Mammary epithelial cell (primary cell): ENCODE measurements at regions of chr6 and their contacts with region 1.

Region 1: DNA sequence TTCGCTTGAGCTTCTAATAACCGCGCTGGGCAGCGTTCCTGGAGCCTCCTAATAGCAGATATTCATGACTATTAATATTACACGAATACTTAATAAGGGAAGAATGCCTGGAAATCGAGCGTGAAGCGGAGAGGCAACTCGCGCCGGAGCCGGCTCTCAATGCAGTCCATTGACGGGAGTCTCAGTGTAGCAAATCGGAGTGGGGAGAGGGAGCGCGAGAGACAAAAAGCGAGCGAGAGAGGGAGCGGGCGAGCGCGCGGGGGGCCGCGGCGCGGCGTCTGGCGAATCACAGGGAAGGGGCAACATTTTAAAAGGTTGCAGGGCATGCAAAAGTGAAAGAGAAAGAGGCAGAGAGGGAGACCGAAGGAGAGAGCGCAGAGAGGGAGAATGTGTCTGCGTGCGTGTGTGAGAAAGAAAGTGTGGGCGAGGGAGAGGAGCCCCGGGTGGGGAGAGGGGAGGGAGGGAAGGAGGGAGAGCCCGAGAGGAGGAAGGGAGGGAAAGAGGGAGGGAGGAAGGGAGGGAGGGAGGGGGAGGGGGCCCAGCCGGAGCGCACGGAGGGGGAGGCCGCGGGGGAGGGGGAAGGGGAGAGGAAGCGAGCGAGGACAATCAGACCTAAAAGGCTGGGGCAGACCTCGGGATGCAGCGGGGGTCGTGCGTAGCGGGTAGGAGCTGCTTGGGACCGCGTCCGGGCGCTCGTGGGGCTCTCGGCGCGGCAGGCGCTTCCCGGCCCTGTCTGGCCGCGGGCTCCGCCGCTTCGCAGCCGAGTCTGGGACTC is 2.7 kb downstream of the TFAP2A start:
- DNase-seq: peak; percentile 92
- H3K4me3 ChIP-seq: peak overlapping the region; percentile 84 to 97 (median 96)
- H3K27ac ChIP-seq: peak overlapping the region; percentile 99
- H3K4me1 ChIP-seq: peaks cover 16% of the 10 kb centered on the region
- H3K27me3 ChIP-seq: no peaks in the 10 kb centered on the region
- CTCF ChIP-seq: no peak

Region 2: GRCh38 chr6:8539446-8539845 is 1872.7 kb before region 1 on chr6:
- CTCF ChIA-PET with region 1: no interaction called
- dilution Hi-C with region 1: no loop called
- in situ Hi-C with region 1: no loop called
- intact Hi-C with region 1: loop called (anchors 10 kb)
- DNase-seq: peak; percentile 33
- H3K4me3 ChIP-seq: no peak overlapping the region
- H3K27ac ChIP-seq: no peak overlapping the region
- H3K4me1 ChIP-seq: no peaks in the 10 kb centered on the region
- H3K27me3 ChIP-seq: no peaks in the 10 kb centered on the region
- CTCF ChIP-seq: peak; percentile 24 to 51

Region 3: GRCh38 chr6:9250852-9251251 is 1161.3 kb before region 1 on chr6:
- CTCF ChIA-PET with region 1: interaction called, 4 read pairs
- dilution Hi-C with region 1: no loop called
- in situ Hi-C with region 1: no loop called
- intact Hi-C with region 1: loop called (anchors 5 kb)
- DNase-seq: peak; percentile 61
- H3K4me3 ChIP-seq: no peak overlapping the region
- H3K27ac ChIP-seq: no peak overlapping the region
- H3K4me1 ChIP-seq: no peaks in the 10 kb centered on the region
- H3K27me3 ChIP-seq: no peaks in the 10 kb centered on the region
- CTCF ChIP-seq: peak; percentile 72 to 85

Region 4: DNA sequence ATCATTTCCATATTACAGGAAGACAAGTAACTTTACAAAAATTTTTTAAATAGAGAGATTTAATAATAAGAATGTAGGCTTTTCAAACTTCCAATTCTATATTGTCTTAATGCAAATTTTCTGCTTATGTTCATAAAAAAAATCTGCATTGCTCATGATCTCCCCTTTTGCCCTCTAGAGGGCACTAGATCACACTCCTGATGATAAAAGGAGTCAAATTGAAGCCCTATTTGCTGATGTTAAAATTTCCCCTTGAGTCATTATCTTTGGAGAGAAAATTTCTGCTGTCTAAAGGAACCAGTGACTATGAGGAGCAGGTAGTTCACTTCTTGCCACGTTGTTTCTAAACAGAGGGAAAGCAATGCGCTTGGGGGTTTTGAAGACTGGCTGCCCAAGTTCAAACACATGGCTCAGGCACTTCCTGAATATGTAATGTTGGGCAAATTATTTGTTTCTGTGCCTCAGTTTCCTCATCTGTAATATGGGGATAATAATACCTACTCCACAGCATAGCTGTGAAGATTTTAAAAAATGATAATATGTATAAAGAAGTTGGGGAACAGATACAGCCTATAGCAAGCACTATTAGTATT is 871.5 kb before region 1 on chr6:
- CTCF ChIA-PET with region 1: no interaction called
- dilution Hi-C with region 1: no loop called
- in situ Hi-C with region 1: loop called (anchors 25 kb)
- intact Hi-C with region 1: loop called (anchors 1 kb)
- DNase-seq: peak; percentile 72
- H3K4me3 ChIP-seq: no peak overlapping the region
- H3K27ac ChIP-seq: no peak overlapping the region
- H3K4me1 ChIP-seq: no peaks in the 10 kb centered on the region
- H3K27me3 ChIP-seq: no peaks in the 10 kb centered on the region
- CTCF ChIP-seq: peak; percentile 74 to 80

Region 5: DNA sequence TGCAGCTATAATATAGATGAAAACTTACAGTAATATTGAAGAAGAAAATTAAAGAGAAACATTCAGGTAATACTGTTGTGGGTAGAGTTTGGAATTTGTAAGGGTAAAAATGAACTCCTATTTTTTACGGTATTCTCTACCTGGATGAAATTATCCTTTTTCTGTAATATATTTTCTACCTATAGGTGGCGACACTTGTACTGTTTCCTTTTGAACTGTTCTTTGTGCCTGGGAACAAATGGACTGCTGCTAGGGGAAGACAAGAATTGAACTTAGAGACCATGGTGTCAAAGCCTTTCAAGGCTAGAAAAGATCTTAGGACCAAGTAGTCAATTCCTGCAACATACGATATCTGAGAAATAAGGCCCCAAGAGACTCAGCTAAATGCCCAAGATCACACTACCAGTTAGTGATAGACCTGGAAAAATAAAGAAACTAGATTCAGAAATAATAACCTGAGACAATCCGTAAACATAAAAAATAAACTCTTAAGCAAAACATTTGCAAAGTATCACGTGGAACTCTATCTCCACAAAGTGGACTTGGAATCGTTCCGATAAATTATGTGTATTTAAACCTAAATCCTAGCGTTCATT is 381.1 kb before region 1 on chr6:
- CTCF ChIA-PET with region 1: interaction called, 3 read pairs
- dilution Hi-C with region 1: no loop called
- in situ Hi-C with region 1: no loop called
- intact Hi-C with region 1: loop called (anchors 1 kb)
- DNase-seq: peak; percentile 16
- H3K4me3 ChIP-seq: no peak overlapping the region
- H3K27ac ChIP-seq: no peak overlapping the region
- H3K4me1 ChIP-seq: no peaks in the 10 kb centered on the region
- H3K27me3 ChIP-seq: no peaks in the 10 kb centered on the region
- CTCF ChIP-seq: peak; percentile 53 to 60

Region 6: DNA sequence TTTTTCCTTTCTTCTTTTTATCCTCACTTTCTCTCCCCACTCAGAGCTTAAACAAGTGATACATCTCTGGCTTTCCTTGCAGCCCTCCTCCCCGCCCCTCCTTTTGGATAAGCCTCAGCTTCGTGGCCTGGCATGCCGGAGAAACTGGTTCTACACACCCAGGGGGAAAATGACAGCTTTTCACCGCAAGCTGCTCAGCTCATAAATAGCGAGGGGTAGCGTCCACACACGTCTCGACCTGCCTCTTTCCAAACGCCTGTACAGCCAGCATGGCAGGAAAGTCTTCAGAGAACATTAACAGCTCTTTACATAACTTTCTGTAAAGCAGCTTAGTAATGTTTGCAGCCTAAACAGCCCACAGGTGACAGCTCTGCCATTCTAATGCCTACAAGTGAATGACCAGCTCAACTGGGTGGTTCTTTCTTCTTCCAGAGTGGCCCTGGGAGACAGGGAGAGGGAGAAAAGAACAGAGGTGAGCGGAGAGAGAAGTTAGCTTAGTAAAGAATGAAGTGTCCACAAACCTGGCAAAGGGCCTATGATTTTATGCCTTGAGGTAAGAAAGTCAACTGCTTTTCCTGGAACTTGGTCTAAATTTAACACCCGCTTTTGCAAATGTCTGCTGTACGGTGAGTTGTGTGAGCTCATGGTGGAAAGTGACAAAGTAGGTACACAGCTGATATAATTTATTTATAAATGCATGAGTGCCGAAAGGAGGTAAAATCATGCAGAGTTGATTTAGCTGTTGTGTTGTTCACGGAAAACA is 248.8 kb before region 1 on chr6:
- CTCF ChIA-PET with region 1: interaction called, 3 read pairs
- dilution Hi-C with region 1: no loop called
- in situ Hi-C with region 1: no loop called
- intact Hi-C with region 1: loop called (anchors 2 kb)
- DNase-seq: peak; percentile 98
- H3K4me3 ChIP-seq: peak overlapping the region; percentile 43 to 59 (median 47)
- H3K27ac ChIP-seq: peak overlapping the region; percentile 93
- H3K4me1 ChIP-seq: peaks cover 21% of the 10 kb centered on the region
- H3K27me3 ChIP-seq: no peaks in the 10 kb centered on the region
- CTCF ChIP-seq: no peak

Region 7: DNA sequence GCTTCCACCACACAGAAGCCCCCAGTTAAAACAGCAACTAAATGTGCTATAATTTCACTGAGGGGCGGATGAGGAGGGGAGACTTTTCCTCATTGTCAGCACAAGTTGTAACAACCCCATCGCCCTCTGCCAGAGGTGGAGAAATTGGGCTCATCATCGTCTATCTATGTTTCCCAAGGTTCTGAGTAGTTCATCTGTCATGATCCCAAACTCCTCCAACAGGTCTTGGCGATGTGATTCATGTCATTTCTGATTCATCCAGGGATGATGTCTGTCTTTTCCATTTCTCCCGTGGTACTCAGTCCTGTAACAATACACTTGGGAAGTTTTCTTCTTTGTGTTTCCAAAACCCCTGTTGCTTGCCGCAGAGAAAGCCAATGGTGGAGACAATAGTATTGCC is 48.2 kb before region 1 on chr6:
- CTCF ChIA-PET with region 1: no interaction called
- dilution Hi-C with region 1: no loop called
- in situ Hi-C with region 1: no loop called
- intact Hi-C with region 1: no loop called
- DNase-seq: peak; percentile 81
- H3K4me3 ChIP-seq: no peak overlapping the region
- H3K27ac ChIP-seq: peak overlapping the region; percentile 66
- H3K4me1 ChIP-seq: peaks cover 7% of the 10 kb centered on the region
- H3K27me3 ChIP-seq: no peaks in the 10 kb centered on the region
- CTCF ChIP-seq: no peak

Region 8: GRCh38 chr6:10434692-10435376 is 22.7 kb after region 1 on chr6:
- CTCF ChIA-PET with region 1: interaction called, 18 read pairs
- dilution Hi-C with region 1: no loop called
- in situ Hi-C with region 1: no loop called
- intact Hi-C with region 1: loop called (anchors 1 kb)
- DNase-seq: peak; percentile 49
- H3K4me3 ChIP-seq: peak overlapping the region; percentile 15 to 31 (median 19)
- H3K27ac ChIP-seq: peak overlapping the region; percentile 91
- H3K4me1 ChIP-seq: peaks cover 48% of the 10 kb centered on the region
- H3K27me3 ChIP-seq: no peaks in the 10 kb centered on the region
- CTCF ChIP-seq: peak; percentile 54 to 60